PC-3 (cell line): ENCODE measurements at regions of chr18 and their contacts with region 1.

Region 1: DNA sequence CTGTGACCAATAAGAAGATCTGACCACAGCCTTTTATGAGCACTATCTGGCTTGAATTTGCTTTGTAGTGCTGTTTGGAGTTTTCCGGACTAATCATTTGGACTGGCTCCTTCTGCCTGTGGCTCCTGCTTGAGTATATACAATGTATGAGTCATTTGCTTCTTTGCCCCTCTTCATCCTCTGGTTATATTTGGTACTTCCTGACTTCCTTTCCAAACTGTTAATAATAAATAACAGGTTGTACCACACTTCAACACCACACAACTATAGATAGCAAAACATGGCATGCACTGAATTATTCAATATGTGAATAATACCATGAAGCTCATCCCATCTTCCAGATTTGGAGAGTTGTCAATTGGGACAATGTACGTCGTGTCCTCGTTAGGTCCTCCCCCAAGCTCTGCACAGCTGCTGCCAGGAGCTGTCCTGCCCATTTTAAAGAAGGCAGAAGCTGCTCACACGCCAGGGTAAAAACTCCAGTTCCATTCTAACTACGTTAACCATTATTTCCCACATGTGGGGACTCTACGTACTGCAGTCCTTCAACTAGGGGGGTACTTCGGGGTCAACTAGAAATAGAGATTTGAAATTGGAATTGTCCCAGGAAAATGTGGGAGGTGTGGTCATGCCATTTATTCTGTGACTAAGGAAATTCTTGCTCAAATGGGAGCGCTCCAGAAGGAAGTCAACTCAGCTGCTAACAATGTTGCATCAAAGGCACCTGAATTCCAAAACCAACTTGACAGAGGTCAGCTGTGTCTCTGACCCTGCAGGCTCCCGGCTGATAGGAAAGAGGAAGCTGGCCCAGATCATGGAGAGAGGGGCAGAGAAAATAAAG is 38.1 kb downstream of the ST8SIA5 start:
- DNase-seq: peak; percentile 74
- ATAC-seq: peak; percentile 87
- H3K4me3 ChIP-seq: peak overlapping the region; percentile 39; the same call in 1 of the 2 replicates
- H3K27ac ChIP-seq: peak overlapping the region; percentile 92
- H3K4me1 ChIP-seq: peaks cover 14% of the 10 kb centered on the region
- H3K27me3 ChIP-seq: no peaks in the 10 kb centered on the region
- CTCF ChIP-seq: no peak

Region 2: DNA sequence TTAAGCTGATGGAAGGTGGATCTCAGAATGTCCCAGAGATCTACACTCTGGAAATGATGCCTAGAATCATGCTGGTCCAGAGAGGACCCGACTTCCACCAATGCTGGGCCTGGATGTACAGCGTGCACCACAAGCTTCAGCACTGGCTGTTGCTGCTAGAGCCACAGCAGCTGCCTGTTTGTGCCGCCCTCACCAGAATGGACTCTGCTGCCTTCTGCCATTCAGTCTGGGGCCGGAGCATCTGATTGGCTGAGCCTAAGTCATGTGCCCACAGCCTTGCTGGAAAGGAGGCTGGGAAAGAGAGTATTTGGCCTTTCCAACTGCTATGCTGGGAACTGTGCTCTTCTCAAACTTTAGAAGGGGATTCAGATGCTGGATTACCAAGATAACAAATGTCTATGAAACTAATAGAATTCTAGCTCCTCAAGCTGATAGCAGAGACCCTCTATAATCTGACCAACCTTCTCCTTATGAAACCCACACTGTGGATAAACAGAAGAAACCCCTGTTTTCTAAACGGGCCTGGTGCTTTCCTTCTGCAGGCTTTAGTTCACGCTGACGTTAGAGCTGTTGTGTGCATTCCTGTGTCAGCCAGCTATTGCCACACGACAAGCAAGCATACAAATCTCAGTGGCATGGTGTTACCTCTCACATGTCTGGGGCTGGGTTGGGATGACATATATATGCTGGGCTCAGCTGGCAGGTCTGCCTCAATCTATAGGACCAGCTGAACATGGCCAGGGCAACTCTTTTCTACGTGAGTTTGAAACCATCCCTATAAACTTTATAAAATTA is 57.6 kb before region 1 on chr18:
- CTCF ChIA-PET with region 1: no interaction called
- POLR2A ChIA-PET with region 1: no interaction called
- intact Hi-C with region 1: loop called (anchors 2 kb)
- DNase-seq: no peak
- ATAC-seq: no peak
- H3K4me3 ChIP-seq: no peak overlapping the region
- H3K27ac ChIP-seq: no peak overlapping the region
- H3K4me1 ChIP-seq: no peaks in the 10 kb centered on the region
- H3K27me3 ChIP-seq: no peaks in the 10 kb centered on the region
- CTCF ChIP-seq: no peak

Region 3: DNA sequence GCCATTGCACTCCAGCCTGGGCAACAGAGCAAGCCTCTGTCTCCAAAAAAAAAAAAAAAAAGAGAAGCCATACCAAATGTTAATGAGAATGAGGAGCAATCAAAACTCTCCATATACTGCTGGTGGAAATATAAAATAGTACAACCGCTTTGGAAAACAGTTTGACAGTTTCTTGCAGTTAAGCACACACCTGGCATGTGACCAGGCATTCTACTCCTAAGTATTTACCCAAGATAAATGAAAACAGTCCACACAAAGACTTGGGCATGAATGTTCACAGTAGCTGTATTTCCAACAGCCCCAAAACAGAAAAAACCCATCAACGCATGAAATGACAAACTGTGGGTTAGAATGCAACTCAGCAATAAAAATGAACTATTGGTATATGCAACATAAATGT is 114.1 kb after region 1 on chr18:
- CTCF ChIA-PET with region 1: no interaction called
- POLR2A ChIA-PET with region 1: no interaction called
- intact Hi-C with region 1: no loop called
- DNase-seq: no peak
- ATAC-seq: no peak
- H3K4me3 ChIP-seq: no peak overlapping the region
- H3K27ac ChIP-seq: no peak overlapping the region
- H3K4me1 ChIP-seq: no peaks in the 10 kb centered on the region
- H3K27me3 ChIP-seq: no peaks in the 10 kb centered on the region
- CTCF ChIP-seq: no peak